ENCODE measurements at regions of chr20 and their contacts with region 1.

Region 1: DNA sequence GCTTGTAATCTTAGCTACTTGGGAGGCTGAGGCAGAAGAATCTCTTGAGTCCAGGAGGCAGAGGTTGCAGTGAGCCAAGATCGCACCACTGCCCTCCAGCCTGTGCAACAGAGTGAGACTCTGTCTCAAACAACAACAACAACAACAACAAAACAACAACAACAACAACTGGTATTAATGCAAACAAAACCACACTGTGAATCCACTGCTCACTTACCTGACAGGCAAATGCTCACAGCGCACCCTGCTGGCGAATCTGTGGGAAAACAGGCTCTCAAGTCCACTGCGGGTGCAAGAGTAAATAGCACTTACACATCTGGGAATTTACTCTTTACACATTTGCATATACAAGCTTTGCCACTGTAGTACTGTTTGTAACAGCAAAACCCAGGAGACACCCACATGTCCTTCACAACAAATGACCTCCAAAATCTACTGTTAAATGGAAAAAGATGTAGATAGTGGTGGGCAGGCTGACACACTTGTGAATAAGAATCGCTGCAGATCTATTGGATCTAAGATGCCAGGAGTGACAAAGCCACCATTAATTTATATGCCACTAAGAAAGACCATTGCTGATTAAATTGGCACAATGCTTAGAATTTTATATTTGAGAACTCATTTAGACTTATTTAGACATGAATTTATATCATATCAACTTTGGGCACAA is 29.3 kb downstream of the NSFL1C start:
- DNase-seq: peak; percentile 83
- ATAC-seq: peak; percentile 51
- H3K4me3 ChIP-seq: no peak overlapping the region
- H3K4me3 Mint-ChIP-seq: no peak overlapping the region
- H3K27ac ChIP-seq: no peak overlapping the region
- H3K27ac Mint-ChIP-seq: peak overlapping the region; percentile 50
- H3K4me1 ChIP-seq: peaks cover 20 to 23% of the 10 kb centered on the region in 2 donors
- H3K4me1 Mint-ChIP-seq: peaks cover 35% of the 10 kb centered on the region
- H3K27me3 ChIP-seq: no peaks in the 10 kb centered on the region
- H3K27me3 Mint-ChIP-seq: peaks cover 3% of the 10 kb centered on the region
- CTCF ChIP-seq: peak; percentile 89

Region 2: GRCh38 chr20:539848-540247 is 897.5 kb before region 1 on chr20:
- CTCF ChIA-PET with region 1: no interaction called
- POLR2A ChIA-PET with region 1: no interaction called
- intact Hi-C with region 1: no loop called
- DNase-seq: no peak
- ATAC-seq: no peak
- H3K4me3 ChIP-seq: no peak overlapping the region
- H3K4me3 Mint-ChIP-seq: no peak overlapping the region
- H3K27ac ChIP-seq: no peak overlapping the region
- H3K27ac Mint-ChIP-seq: no peak overlapping the region
- H3K4me1 ChIP-seq: peaks cover 48 to 58% of the 10 kb centered on the region in 2 donors
- H3K4me1 Mint-ChIP-seq: peaks cover 87% of the 10 kb centered on the region
- H3K27me3 ChIP-seq: no peaks in the 10 kb centered on the region
- H3K27me3 Mint-ChIP-seq: no peaks in the 10 kb centered on the region
- CTCF ChIP-seq: no peak

Region 3: GRCh38 chr20:1313236-1313964 is 124.0 kb before region 1 on chr20:
- CTCF ChIA-PET with region 1: interaction called, 74 read pairs
- POLR2A ChIA-PET with region 1: interaction called, 3 read pairs
- intact Hi-C with region 1: loop called (anchors 1 kb)
- DNase-seq: peak; percentile 78
- ATAC-seq: peak; percentile 65
- H3K4me3 ChIP-seq: no peak overlapping the region
- H3K4me3 Mint-ChIP-seq: no peak overlapping the region
- H3K27ac ChIP-seq: no peak overlapping the region
- H3K27ac Mint-ChIP-seq: no peak overlapping the region
- H3K4me1 ChIP-seq: peaks cover 0 to 7% of the 10 kb centered on the region in 2 donors
- H3K4me1 Mint-ChIP-seq: no peaks in the 10 kb centered on the region
- H3K27me3 ChIP-seq: no peaks in the 10 kb centered on the region
- H3K27me3 Mint-ChIP-seq: peaks cover 4% of the 10 kb centered on the region
- CTCF ChIP-seq: peak; percentile 99

Region 4: DNA sequence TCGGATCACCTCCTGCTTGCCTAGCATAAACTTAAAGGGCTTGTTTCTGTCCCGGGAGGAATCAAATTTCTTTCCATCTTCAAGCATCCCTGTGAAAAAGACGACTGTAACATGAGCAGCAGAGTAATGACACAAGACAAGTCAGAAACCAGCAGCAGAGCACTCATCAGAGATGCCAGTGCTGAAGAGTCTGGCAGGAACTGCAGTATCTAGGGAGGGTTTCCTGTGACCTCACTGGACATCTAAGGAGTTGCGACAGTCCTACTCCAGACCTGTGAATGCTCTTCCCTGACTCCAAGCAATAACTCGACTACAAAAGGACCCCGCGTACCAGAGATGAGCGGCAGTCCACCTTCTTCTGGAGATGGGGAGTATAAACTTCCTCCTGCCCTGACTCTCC is 61.9 kb before region 1 on chr20:
- CTCF ChIA-PET with region 1: interaction called, 6 read pairs
- POLR2A ChIA-PET with region 1: no interaction called
- intact Hi-C with region 1: loop called (anchors 5 kb)
- DNase-seq: no peak
- ATAC-seq: no peak
- H3K4me3 ChIP-seq: no peak overlapping the region
- H3K4me3 Mint-ChIP-seq: no peak overlapping the region
- H3K27ac ChIP-seq: peak overlapping the region in 1 of 2 donors; percentile 60
- H3K27ac Mint-ChIP-seq: no peak overlapping the region
- H3K4me1 ChIP-seq: peaks cover 37 to 45% of the 10 kb centered on the region in 2 donors
- H3K4me1 Mint-ChIP-seq: peaks cover 54% of the 10 kb centered on the region
- H3K27me3 ChIP-seq: no peaks in the 10 kb centered on the region
- H3K27me3 Mint-ChIP-seq: no peaks in the 10 kb centered on the region
- CTCF ChIP-seq: no peak

Region 5: DNA sequence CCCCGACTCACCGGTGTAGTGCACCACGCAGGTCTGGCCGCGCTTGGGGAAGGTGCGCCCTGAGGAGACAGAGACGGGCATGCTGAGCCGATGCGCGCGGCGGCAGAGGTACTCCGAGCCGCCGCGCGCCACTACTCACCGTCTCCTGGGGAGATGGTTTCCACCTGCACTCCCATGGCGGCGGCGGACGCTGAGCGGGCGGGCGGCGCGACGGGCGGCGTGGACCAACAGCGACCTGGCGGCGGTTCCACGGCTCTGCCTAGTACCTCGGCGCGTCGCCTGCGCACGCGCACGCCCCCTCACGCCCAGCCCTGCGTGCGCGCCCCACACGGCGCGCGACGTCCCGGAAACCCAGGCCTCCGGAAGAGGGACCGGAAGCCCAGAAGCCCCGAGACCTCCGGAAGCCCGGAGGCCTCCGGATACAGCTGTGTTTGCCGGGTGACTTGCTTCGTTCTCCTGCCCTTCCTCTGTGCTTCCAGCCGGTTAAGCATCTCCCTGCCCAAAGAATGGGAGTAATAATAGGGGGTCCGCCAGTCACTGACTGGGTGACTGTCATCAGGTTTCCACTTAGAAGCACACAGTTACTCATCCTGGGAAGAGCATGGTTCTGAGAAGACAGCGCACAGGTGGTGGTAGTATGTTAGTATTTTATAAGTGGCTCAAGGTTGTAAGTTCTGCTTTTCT is 44.4 kb before region 1 on chr20 and contains the start of gene FKBP1A:
- CTCF ChIA-PET with region 1: interaction called, 66 read pairs
- POLR2A ChIA-PET with region 1: interaction called, 4 read pairs
- intact Hi-C with region 1: loop called (anchors 1 kb)
- DNase-seq: peak; percentile 97
- ATAC-seq: peak; percentile 88
- H3K4me3 ChIP-seq: peak within 1 kb of the TSS; percentile 66 to 93 (median 76)
- H3K4me3 Mint-ChIP-seq: peak within 1 kb of the TSS; percentile 100
- H3K27ac ChIP-seq: peak within 1 kb of the TSS; percentile 82 to 84
- H3K27ac Mint-ChIP-seq: peak within 1 kb of the TSS; percentile 100
- H3K4me1 ChIP-seq: peaks cover 64 to 66% of the 10 kb centered on the region in 2 donors
- H3K4me1 Mint-ChIP-seq: peaks cover 83% of the 10 kb centered on the region
- H3K27me3 ChIP-seq: no peaks in the 10 kb centered on the region
- H3K27me3 Mint-ChIP-seq: no peaks in the 10 kb centered on the region
- CTCF ChIP-seq: no peak
- total RNA-seq, gene FKBP1A: 86.5 and 86.7 TPM in 2 replicates

Region 6: DNA sequence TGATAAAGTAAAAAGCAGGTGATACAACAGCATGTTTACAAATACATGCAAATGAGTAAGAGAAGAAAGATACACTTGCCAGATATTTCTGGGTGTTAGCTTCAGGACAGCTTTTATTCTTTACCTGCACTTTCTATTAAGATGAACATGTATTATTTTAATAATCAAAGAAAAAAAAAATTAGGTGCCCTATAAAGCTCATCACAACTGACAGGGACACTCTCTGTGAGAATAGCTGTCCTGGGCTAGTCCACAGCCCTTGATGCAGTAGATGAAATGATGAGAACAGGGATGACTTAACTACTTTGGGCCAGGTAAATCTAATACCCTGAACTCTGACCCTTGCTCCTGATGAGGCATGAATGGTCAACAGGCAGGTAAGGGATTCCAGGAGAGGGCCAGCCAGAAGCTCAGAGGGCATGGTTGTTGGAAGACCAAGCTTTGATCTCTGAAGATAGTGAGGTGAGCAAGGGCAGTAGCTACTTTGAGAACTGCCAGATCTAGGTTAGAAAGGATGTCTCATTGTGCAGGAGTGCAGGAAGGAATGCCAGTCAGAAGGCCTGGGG is 13.6 kb after region 1 on chr20:
- CTCF ChIA-PET with region 1: interaction called, 18 read pairs
- POLR2A ChIA-PET with region 1: no interaction called
- intact Hi-C with region 1: no loop called
- DNase-seq: no peak
- ATAC-seq: no peak
- H3K4me3 ChIP-seq: no peak overlapping the region
- H3K4me3 Mint-ChIP-seq: no peak overlapping the region
- H3K27ac ChIP-seq: no peak overlapping the region
- H3K27ac Mint-ChIP-seq: no peak overlapping the region
- H3K4me1 ChIP-seq: no peaks in the 10 kb centered on the region
- H3K4me1 Mint-ChIP-seq: no peaks in the 10 kb centered on the region
- H3K27me3 ChIP-seq: no peaks in the 10 kb centered on the region
- H3K27me3 Mint-ChIP-seq: no peaks in the 10 kb centered on the region
- CTCF ChIP-seq: no peak

Region 7: DNA sequence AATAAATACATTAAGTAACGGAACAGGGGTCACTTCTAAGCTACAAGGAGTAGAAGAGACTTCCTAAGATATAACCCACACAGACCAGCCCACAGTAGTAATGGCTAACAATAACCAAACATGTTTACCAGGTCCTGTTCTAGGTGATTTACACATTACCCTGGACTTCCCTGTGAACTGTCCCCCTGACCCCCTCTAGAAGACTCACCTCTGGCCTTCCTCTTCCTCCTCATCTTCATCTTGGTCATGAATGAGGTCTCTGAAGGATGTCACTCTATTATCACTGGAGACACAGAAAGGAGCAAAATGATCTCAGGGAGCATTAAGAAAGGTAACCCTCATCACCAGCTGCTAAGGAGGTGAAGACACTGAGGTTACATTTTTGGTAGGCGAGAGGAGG is 20.6 kb after region 1 on chr20:
- CTCF ChIA-PET with region 1: interaction called, 12 read pairs
- POLR2A ChIA-PET with region 1: no interaction called
- intact Hi-C with region 1: no loop called
- DNase-seq: no peak
- ATAC-seq: no peak
- H3K4me3 ChIP-seq: no peak overlapping the region
- H3K4me3 Mint-ChIP-seq: no peak overlapping the region
- H3K27ac ChIP-seq: no peak overlapping the region
- H3K27ac Mint-ChIP-seq: no peak overlapping the region
- H3K4me1 ChIP-seq: peaks cover 4% of the 10 kb centered on the region in 2 donors
- H3K4me1 Mint-ChIP-seq: peaks cover 14% of the 10 kb centered on the region
- H3K27me3 ChIP-seq: no peaks in the 10 kb centered on the region
- H3K27me3 Mint-ChIP-seq: no peaks in the 10 kb centered on the region
- CTCF ChIP-seq: no peak